Activated CD8-positive, alpha-beta T cell treated with anti-CD3 and anti-CD28 coated beads, Interleukin-2, amount 10 ng/mL, durations not matched to agents 7 days and 5 days (primary cell): ENCODE measurements at regions of chr10 and their contacts with region 1.

Region 1: DNA sequence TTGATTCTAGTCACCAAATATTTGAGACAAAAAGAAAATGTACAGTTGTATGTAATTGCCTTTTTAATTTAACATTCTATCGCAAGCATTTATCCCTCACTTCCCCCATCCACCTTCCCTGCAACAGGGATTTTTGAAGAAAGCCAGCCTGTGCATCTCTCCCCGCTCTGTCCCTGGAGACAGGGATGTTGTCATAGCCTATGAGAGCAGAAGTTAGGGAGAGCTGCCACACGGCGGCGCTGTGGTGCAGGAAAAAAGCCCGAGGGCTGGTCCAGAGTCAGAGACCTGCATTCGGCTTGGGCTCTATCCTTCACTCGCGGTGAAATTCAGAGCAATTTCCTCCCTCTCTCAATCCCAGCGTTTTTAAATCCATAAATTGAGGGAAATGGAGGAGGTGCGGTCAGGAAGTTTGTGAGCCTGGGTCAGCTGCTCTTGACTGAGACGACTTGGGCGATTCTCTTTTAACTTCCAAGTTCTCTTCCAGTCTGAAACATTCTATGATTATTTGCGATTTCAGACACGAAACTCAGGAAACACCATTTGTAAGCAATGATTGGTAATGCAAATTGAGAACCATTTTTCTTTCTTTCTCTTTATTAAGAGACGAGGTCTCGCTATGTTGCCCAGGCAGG is 17.5 kb downstream of the HKDC1 start:
- DNase-seq: peak; percentile 91
- ATAC-seq: peak; percentile 98
- H3K4me3 Mint-ChIP-seq: no peak overlapping the region
- H3K27ac Mint-ChIP-seq: no peak overlapping the region
- H3K4me1 Mint-ChIP-seq: peaks cover 42% of the 10 kb centered on the region
- H3K27me3 Mint-ChIP-seq: no peaks in the 10 kb centered on the region

Region 2: GRCh38 chr10:69146759-69147158 is 90.9 kb before region 1 on chr10:
- CTCF ChIA-PET with region 1: no interaction called
- POLR2A ChIA-PET with region 1: no interaction called
- DNase-seq: no peak
- ATAC-seq: no peak
- H3K4me3 Mint-ChIP-seq: no peak overlapping the region
- H3K27ac Mint-ChIP-seq: no peak overlapping the region
- H3K4me1 Mint-ChIP-seq: peaks cover 20% of the 10 kb centered on the region
- H3K27me3 Mint-ChIP-seq: no peaks in the 10 kb centered on the region

Region 3: GRCh38 chr10:69222157-69223027 is 15.3 kb before region 1 on chr10:
- CTCF ChIA-PET with region 1: interaction called, 35 read pairs
- POLR2A ChIA-PET with region 1: no interaction called
- DNase-seq: peak; percentile 89
- ATAC-seq: peak; percentile 91
- H3K4me3 Mint-ChIP-seq: peak overlapping the region; percentile 77
- H3K27ac Mint-ChIP-seq: peak overlapping the region; percentile 95
- H3K4me1 Mint-ChIP-seq: peaks cover 51% of the 10 kb centered on the region
- H3K27me3 Mint-ChIP-seq: no peaks in the 10 kb centered on the region